Naive thymus-derived CD4-positive, alpha-beta T cell (primary cell): ENCODE measurements at regions of chrX and their contacts with region 1.

Region 1: DNA sequence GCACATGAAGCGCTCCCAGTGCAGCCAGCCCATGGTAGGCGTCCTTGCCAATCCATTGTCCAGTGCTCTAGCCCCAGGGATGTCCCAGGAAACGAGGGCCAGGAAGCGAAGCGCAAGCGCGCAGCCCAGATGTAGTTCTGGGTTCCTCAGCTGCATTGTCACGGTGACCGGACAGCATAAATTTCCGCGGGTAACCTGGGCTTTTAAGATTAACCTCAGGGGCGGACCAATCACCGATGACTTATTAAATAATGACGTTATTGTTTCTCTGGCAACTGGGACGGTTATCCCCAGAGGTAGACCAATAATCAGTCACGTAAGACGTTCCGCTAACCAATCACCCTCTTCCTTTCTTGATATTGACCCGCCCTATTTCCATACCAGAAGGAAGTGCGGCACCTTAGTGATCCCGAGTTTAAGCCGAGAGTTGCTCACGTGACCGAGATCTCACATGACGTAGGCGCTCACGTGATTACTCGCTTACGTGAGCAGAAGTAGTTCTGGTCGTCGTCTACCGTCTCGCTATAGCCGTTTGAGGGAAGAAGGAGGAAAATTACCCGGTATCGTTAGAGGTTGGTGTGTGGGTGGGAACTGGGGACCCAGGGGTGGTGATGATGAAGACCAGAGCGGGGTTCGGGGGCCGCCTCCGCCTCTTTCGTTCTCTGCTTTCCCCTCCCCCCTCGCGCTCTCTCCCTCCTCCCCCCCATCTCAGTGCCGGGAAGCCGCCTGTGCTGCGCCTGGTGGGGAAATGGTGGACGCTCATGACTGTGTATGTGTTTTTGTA is at the starts of genes GLA and HNRNPH2:
- DNase-seq: peak; percentile 64 to 94 (median 88)
- ATAC-seq: peak; percentile 96
- H3K4me3 ChIP-seq: peak within 1 kb of the TSS; percentile 82
- H3K4me3 Mint-ChIP-seq: peak within 1 kb of the TSS; percentile 90 to 98 (median 95)
- H3K27ac ChIP-seq: peak within 1 kb of the TSS; percentile 97
- H3K27ac Mint-ChIP-seq: peak within 1 kb of the TSS; percentile 97 to 100 (median 99)
- H3K4me1 ChIP-seq: peaks cover 11 to 19% of the 10 kb centered on the region in 2 donors
- H3K4me1 Mint-ChIP-seq: peaks cover 11 to 39% (median 28%) of the 10 kb centered on the region in 7 donors
- H3K27me3 ChIP-seq: no peaks in the 10 kb centered on the region
- H3K27me3 Mint-ChIP-seq: peaks cover 0 to 2% (median 0%) of the 10 kb centered on the region in 5 donors
- total RNA-seq, gene GLA: 12.5 to 40.1 (median 27.1) TPM
- total RNA-seq, gene HNRNPH2: 32.1 to 46.3 (median 41.5) TPM

Region 2: DNA sequence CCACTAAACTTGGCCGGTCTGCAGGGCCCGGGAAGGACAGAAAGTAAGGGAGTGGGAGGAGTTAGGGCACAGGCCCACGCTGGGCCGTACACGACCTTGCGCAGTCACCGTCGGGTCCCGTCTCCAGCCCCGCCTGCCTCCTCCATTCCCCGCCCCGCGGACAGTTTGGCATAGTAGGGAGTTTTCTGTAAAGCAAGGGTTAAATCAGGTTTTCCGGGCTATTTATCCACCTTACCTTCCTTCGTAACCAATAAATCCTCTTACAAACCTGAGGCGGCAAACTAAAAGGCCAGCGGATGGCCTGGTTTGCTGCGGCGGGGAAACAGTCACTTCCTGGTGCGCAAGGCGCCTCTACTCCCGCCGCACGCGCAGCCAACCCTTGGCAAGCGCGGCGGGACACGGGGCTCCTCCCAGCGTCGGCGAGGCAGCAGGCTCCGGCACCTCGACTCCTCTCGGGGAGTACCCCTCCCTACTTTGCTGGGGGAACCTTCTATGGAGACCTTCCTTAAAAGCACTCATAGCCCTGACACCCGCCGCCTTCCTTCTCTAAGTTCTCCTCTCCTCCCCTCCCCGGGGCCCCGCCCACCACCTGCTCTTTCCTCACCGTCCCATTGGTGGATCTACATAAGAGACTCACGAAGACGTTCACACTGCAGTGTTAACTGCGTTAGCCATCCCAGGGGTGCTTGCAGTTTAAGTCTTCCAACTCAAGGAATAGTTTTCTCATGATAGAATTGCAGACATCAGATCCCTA is 356.2 kb before region 1 on chrX and contains the start of gene TRMT2B:
- CTCF ChIA-PET with region 1: no interaction called
- POLR2A ChIA-PET with region 1: no interaction called
- intact Hi-C with region 1: loop called (anchors 1 to 5 kb)
- DNase-seq: peak; percentile 47 to 87 (median 80)
- ATAC-seq: peak; percentile 92
- H3K4me3 ChIP-seq: peak within 1 kb of the TSS; percentile 81
- H3K4me3 Mint-ChIP-seq: peak within 1 kb of the TSS; percentile 78 to 94 (median 92)
- H3K27ac ChIP-seq: peak within 1 kb of the TSS; percentile 93
- H3K27ac Mint-ChIP-seq: peak within 1 kb of the TSS; percentile 95 to 98 (median 97)
- H3K4me1 ChIP-seq: peaks cover 4% of the 10 kb centered on the region in 2 donors
- H3K4me1 Mint-ChIP-seq: peaks cover 12 to 43% (median 22%) of the 10 kb centered on the region in 7 donors
- H3K27me3 ChIP-seq: no peaks in the 10 kb centered on the region
- H3K27me3 Mint-ChIP-seq: no peaks in the 10 kb centered on the region
- total RNA-seq, gene TRMT2B: 25.5 to 51.1 (median 41.4) TPM

Region 3: GRCh38 chrX:101337776-101338271 is 70.1 kb before region 1 on chrX:
- CTCF ChIA-PET with region 1: no interaction called
- POLR2A ChIA-PET with region 1: no interaction called
- intact Hi-C with region 1: no loop called
- DNase-seq: no peak
- ATAC-seq: no peak
- H3K4me3 ChIP-seq: no peak overlapping the region
- H3K4me3 Mint-ChIP-seq: no peak overlapping the region
- H3K27ac ChIP-seq: no peak overlapping the region
- H3K27ac Mint-ChIP-seq: peak overlapping the region in 1 of 9 donors; percentile 56
- H3K4me1 ChIP-seq: no peaks in the 10 kb centered on the region
- H3K4me1 Mint-ChIP-seq: peaks cover 0 to 8% (median 0%) of the 10 kb centered on the region in 7 donors
- H3K27me3 ChIP-seq: no peaks in the 10 kb centered on the region
- H3K27me3 Mint-ChIP-seq: no peaks in the 10 kb centered on the region

Region 4: DNA sequence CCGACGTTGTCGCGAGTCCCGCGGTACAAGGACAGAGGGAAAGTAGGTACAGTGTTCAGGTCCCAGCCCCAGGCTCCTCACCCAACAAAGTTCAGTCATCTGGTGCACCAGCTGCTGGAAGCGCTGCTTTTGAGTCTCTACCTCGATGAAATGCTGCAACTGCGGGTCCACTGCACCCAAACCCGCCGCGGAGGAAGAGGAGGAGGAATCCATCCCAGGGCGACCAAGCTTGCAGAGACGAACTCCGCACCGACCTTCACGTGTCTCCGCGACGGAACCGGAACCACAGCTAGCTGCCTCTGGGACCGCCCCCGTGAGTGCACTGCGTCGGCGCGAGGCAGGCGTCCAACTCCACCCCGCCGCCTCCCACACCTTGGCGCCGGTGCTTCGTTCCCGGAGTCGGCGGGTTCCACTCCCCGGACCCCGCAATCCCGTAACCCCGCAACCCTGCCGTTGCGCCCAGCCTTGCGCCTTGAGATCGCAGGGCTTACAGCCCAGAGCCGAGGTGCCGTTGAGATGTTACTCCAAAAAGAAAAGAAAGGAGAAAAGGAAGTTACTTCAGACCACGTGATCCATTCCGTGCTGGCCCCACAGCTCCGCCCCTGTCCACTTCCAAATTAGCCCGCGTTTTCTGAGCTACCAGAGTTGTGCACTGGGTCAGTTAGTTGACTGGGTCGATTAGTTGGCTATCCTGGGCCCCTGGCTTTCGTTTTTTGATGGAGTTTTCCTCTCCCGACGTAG is 59.3 kb before region 1 on chrX and contains the start of gene TIMM8A:
- CTCF ChIA-PET with region 1: no interaction called
- POLR2A ChIA-PET with region 1: no interaction called
- intact Hi-C with region 1: loop called (anchors 1 kb)
- DNase-seq: peak; percentile 48 to 79 (median 72)
- ATAC-seq: peak; percentile 99
- H3K4me3 ChIP-seq: peak within 1 kb of the TSS; percentile 75
- H3K4me3 Mint-ChIP-seq: peak within 1 kb of the TSS; percentile 84 to 93 (median 91)
- H3K27ac ChIP-seq: peak within 1 kb of the TSS; percentile 91
- H3K27ac Mint-ChIP-seq: peak within 1 kb of the TSS; percentile 80 to 96 (median 91)
- H3K4me1 ChIP-seq: peaks cover 0 to 4% of the 10 kb centered on the region in 2 donors
- H3K4me1 Mint-ChIP-seq: peaks cover 0 to 25% (median 19%) of the 10 kb centered on the region in 7 donors
- H3K27me3 ChIP-seq: no peaks in the 10 kb centered on the region
- H3K27me3 Mint-ChIP-seq: no peaks in the 10 kb centered on the region
- total RNA-seq, gene TIMM8A: 6.7 to 13.6 (median 12.2) TPM

Region 5: DNA sequence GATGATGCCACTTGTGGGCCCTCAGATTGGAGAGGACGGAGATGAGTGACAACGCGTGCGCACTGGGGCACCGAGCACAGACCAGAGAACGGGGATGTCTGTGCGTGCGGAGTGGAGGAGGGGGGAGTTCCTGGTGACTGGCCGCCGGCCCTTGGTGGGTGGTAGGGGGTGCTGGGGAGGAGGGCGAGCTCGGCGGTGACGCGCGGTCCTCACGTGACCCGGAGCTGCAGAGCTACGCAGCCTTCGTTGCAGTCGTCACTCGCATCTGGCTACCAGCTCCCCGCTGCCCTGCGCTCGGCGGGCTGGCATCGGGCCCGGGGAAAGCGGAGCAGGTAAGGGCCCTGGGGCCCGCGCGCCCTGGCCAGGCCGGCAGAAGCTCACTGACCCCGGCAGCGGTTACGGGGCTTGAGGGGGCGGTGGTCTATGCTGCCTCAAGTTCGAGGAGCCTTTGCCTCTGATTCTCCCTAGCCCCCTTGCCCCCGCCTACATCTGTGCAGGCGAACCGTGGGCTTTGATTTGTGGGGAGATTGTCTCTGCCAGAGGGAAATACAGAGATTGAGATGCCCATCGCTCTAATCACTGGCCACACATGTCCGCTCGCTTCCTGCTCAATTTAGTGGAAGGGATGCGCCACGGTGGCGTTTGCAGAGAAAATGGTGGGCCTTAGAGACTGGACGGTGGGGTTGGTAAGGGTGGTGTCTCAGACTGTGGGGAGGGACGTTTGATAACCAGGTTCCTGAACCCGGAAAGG is 77.4 kb after region 1 on chrX and contains the start of gene ARMCX4:
- CTCF ChIA-PET with region 1: no interaction called
- POLR2A ChIA-PET with region 1: no interaction called
- intact Hi-C with region 1: loop called in 1 of 2 experiments (anchors 2 kb)
- DNase-seq: peak; percentile 21 to 61 (median 43)
- ATAC-seq: peak; percentile 91
- H3K4me3 ChIP-seq: peak within 1 kb of the TSS; percentile 64
- H3K4me3 Mint-ChIP-seq: peak within 1 kb of the TSS; percentile 74 to 93 (median 88)
- H3K27ac ChIP-seq: peak within 1 kb of the TSS; percentile 72
- H3K27ac Mint-ChIP-seq: peak within 1 kb of the TSS; percentile 29 to 96 (median 92)
- H3K4me1 ChIP-seq: no peaks in the 10 kb centered on the region
- H3K4me1 Mint-ChIP-seq: peaks cover 0 to 10% (median 9%) of the 10 kb centered on the region in 7 donors
- H3K27me3 ChIP-seq: no peaks in the 10 kb centered on the region
- H3K27me3 Mint-ChIP-seq: peaks cover 0 to 11% (median 0%) of the 10 kb centered on the region in 5 donors
- total RNA-seq, gene ARMCX4: 2.1 to 18.1 (median 14.3) TPM

Region 6: GRCh38 chrX:101931488-101932248 is 523.7 kb after region 1 on chrX and contains the start of gene ZMAT1:
- CTCF ChIA-PET with region 1: interaction called, 4 read pairs
- POLR2A ChIA-PET with region 1: interaction called, 3 read pairs
- intact Hi-C with region 1: loop called (anchors 1 to 5 kb)
- DNase-seq: peak; percentile 73 to 92 (median 87)
- ATAC-seq: peak; percentile 93
- H3K4me3 ChIP-seq: peak within 1 kb of the TSS; percentile 63
- H3K4me3 Mint-ChIP-seq: peak within 1 kb of the TSS; percentile 80 to 95 (median 88)
- H3K27ac ChIP-seq: peak within 1 kb of the TSS; percentile 89
- H3K27ac Mint-ChIP-seq: peak within 1 kb of the TSS; percentile 87 to 99 (median 96)
- H3K4me1 ChIP-seq: peaks cover 0 to 8% of the 10 kb centered on the region in 2 donors
- H3K4me1 Mint-ChIP-seq: peaks cover 8 to 44% (median 33%) of the 10 kb centered on the region in 7 donors
- H3K27me3 ChIP-seq: no peaks in the 10 kb centered on the region
- H3K27me3 Mint-ChIP-seq: no peaks in the 10 kb centered on the region
- total RNA-seq, gene ZMAT1: 3.0 to 48.3 (median 32.2) TPM

Region 7: DNA sequence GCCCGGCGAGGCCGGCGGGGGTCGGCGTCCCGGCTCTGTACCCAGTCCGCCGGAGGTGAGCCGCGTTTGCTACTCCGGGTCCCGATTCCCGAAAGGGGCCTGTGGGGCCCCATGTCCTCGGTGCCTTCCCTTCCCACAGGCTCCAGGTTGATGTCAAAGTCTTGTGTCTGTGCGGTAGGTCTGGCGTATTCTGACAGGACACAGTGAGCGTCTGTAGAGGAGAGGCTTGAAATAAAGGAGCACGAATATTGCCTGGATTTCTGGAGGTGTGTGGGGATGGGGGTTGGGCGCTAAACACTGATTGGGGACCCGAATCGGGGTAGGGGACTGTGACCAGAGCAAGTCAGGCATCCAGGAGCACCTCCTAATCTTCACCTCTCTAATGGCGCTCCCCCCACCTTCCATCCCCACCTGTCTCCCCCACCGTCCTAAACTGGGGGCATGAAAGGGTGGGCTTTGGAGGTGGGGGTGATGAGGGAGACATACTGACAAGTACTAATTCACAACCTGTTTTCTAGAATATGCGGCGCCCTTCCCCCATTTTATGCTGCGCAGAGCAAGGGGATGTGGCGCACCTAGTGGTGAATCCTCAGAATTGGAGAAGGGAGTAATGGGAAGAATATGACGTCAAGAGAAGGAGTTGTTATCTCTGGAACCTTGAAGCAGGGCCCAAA is 1305.1 kb after region 1 on chrX:
- CTCF ChIA-PET with region 1: no interaction called
- POLR2A ChIA-PET with region 1: no interaction called
- intact Hi-C with region 1: loop called in 1 of 2 experiments (anchors 2 kb)
- DNase-seq: peak in 7 of 9 donors; percentile 9 to 33 (median 23)
- ATAC-seq: no peak
- H3K4me3 ChIP-seq: peak overlapping the region; percentile 50
- H3K4me3 Mint-ChIP-seq: peak overlapping the region; percentile 70 to 94 (median 88)
- H3K27ac ChIP-seq: peak overlapping the region; percentile 14
- H3K27ac Mint-ChIP-seq: peak overlapping the region in 6 of 9 donors; percentile 36 to 93 (median 56)
- H3K4me1 ChIP-seq: peaks cover 0 to 8% of the 10 kb centered on the region in 2 donors
- H3K4me1 Mint-ChIP-seq: peaks cover 5 to 36% (median 25%) of the 10 kb centered on the region in 7 donors
- H3K27me3 ChIP-seq: no peaks in the 10 kb centered on the region
- H3K27me3 Mint-ChIP-seq: peaks cover 5 to 31% (median 8%) of the 10 kb centered on the region in 5 donors

Region 8: GRCh38 chrX:103214870-103215424 is 1807.0 kb after region 1 on chrX and contains the start of gene BEX4:
- CTCF ChIA-PET with region 1: no interaction called
- POLR2A ChIA-PET with region 1: no interaction called
- intact Hi-C with region 1: loop called in 1 of 2 experiments (anchors 1 kb)
- DNase-seq: peak; percentile 62 to 84 (median 78)
- ATAC-seq: peak; percentile 97
- H3K4me3 ChIP-seq: peak within 1 kb of the TSS; percentile 61
- H3K4me3 Mint-ChIP-seq: peak within 1 kb of the TSS; percentile 72 to 91 (median 84)
- H3K27ac ChIP-seq: peak within 1 kb of the TSS; percentile 97
- H3K27ac Mint-ChIP-seq: peak within 1 kb of the TSS; percentile 75 to 96 (median 91)
- H3K4me1 ChIP-seq: no peaks in the 10 kb centered on the region
- H3K4me1 Mint-ChIP-seq: peaks cover 3 to 20% (median 12%) of the 10 kb centered on the region in 7 donors
- H3K27me3 ChIP-seq: no peaks in the 10 kb centered on the region
- H3K27me3 Mint-ChIP-seq: peaks cover 0 to 9% (median 0%) of the 10 kb centered on the region in 5 donors
- total RNA-seq, gene BEX4: 8.8 to 51.2 (median 41.1) TPM